Activated T-helper 1 cell treated with anti-CD3 and anti-CD28 coated beads, Interleukin-12 subunit alpha, Interleukin-12 subunit beta, Interleukin-2, Interleukin-4 antibody, amounts not matched to agents 30 ng/mL and 10 ng/mL and 1 ng/mL, durations not matched to agents 14 hours and 24 hours and 36 hours (primary cell): ENCODE measurements at regions of chr6 and their contacts with region 1.

Region 1: GRCh38 chr6:90068264-90068663 is 174.0 kb downstream of the GJA10 start:
- DNase-seq: no peak
- H3K4me3 Mint-ChIP-seq: peak overlapping the region; percentile 6
- H3K27ac Mint-ChIP-seq: peak overlapping the region; percentile 25
- H3K4me1 Mint-ChIP-seq: peaks cover 81% of the 10 kb centered on the region
- H3K27me3 Mint-ChIP-seq: no peaks in the 10 kb centered on the region

Region 2: GRCh38 chr6:89562118-89562973 is 505.9 kb before region 1 on chr6:
- intact Hi-C with region 1: no loop called
- DNase-seq: no peak
- H3K4me3 Mint-ChIP-seq: no peak overlapping the region
- H3K27ac Mint-ChIP-seq: no peak overlapping the region
- H3K4me1 Mint-ChIP-seq: no peaks in the 10 kb centered on the region
- H3K27me3 Mint-ChIP-seq: peaks cover 14% of the 10 kb centered on the region

Region 3: GRCh38 chr6:90025523-90026061 is 42.7 kb before region 1 on chr6:
- intact Hi-C with region 1: loop called (anchors 2 kb)
- DNase-seq: no peak
- H3K4me3 Mint-ChIP-seq: peak overlapping the region; percentile 69
- H3K27ac Mint-ChIP-seq: peak overlapping the region; percentile 95
- H3K4me1 Mint-ChIP-seq: peaks cover 77% of the 10 kb centered on the region
- H3K27me3 Mint-ChIP-seq: no peaks in the 10 kb centered on the region

Region 4: DNA sequence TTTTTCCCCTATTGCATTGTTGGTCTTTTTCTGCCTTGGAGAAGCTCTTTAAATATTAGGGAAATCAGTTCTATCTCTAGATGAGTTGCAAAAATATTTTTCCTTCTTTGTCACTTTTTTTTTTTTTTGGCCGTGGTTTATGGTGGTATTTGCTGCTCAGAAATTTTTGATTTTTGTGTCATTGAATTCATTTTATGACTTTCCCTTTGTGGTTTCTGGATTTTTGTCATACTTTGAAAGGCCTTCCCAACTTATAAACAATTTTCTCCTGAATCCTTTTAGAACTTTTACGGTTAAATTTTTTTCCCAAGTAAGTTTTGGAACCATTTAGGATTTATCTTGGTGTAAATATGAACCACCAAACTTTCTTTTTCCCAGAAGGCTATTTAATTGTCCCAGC is 28.4 kb before region 1 on chr6:
- intact Hi-C with region 1: no loop called
- DNase-seq: no peak
- H3K4me3 Mint-ChIP-seq: no peak overlapping the region
- H3K27ac Mint-ChIP-seq: no peak overlapping the region
- H3K4me1 Mint-ChIP-seq: peaks cover 26% of the 10 kb centered on the region
- H3K27me3 Mint-ChIP-seq: no peaks in the 10 kb centered on the region

Region 5: DNA sequence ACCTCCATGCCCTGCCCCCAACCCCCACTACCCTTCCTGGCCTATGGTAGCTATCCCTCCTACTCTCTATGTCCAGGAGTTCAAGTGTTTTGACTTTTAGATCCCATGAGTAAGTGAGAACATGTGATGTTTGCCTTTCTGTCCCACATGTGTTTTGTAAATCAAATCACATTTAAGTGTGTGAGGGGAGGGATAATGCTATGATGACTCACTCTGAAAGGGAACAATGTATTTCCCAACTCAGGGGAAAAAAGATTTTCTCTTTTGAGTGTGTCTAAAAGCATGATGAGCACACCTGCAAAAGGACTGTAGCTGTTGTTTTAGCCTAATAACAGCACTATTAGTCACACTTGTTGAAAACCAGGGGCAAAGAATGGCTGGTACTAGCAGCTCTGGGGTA is 19.7 kb after region 1 on chr6:
- intact Hi-C with region 1: loop called (anchors 1 kb)
- DNase-seq: no peak
- H3K4me3 Mint-ChIP-seq: no peak overlapping the region
- H3K27ac Mint-ChIP-seq: peak overlapping the region; percentile 61
- H3K4me1 Mint-ChIP-seq: peaks cover 53% of the 10 kb centered on the region
- H3K27me3 Mint-ChIP-seq: no peaks in the 10 kb centered on the region

Region 6: GRCh38 chr6:90103056-90103800 is 35.0 kb after region 1 on chr6:
- intact Hi-C with region 1: loop called (anchors 1 kb)
- DNase-seq: no peak
- H3K4me3 Mint-ChIP-seq: peak overlapping the region; percentile 79
- H3K27ac Mint-ChIP-seq: peak overlapping the region; percentile 88
- H3K4me1 Mint-ChIP-seq: peaks cover 70% of the 10 kb centered on the region
- H3K27me3 Mint-ChIP-seq: no peaks in the 10 kb centered on the region